GM23248 (cell line): ENCODE measurements at regions of chr3 and their contacts with region 1.

Region 1: GRCh38 chr3:32934150-32934742 is 17.2 kb upstream of the CCR4 start:
- DNase-seq: peak; percentile 47
- H3K4me3 ChIP-seq: no peak overlapping the region
- H3K27ac ChIP-seq: no peak overlapping the region
- H3K4me1 ChIP-seq: no peaks in the 10 kb centered on the region
- H3K27me3 ChIP-seq: 0 out of 2 replicates have a peak, but pooled peaks cover 3% of the 10 kb centered on the region

Region 2: GRCh38 chr3:32733631-32734229 is 200.5 kb before region 1 on chr3:
- in situ Hi-C with region 1: loop called (anchors 10 kb)
- DNase-seq: peak; percentile 59
- H3K4me3 ChIP-seq: no peak overlapping the region
- H3K27ac ChIP-seq: no peak overlapping the region
- H3K4me1 ChIP-seq: no peaks in the 10 kb centered on the region
- H3K27me3 ChIP-seq: no peaks in the 10 kb centered on the region